ENCODE measurements at regions of chr2 and their contacts with region 1.

Region 1: DNA sequence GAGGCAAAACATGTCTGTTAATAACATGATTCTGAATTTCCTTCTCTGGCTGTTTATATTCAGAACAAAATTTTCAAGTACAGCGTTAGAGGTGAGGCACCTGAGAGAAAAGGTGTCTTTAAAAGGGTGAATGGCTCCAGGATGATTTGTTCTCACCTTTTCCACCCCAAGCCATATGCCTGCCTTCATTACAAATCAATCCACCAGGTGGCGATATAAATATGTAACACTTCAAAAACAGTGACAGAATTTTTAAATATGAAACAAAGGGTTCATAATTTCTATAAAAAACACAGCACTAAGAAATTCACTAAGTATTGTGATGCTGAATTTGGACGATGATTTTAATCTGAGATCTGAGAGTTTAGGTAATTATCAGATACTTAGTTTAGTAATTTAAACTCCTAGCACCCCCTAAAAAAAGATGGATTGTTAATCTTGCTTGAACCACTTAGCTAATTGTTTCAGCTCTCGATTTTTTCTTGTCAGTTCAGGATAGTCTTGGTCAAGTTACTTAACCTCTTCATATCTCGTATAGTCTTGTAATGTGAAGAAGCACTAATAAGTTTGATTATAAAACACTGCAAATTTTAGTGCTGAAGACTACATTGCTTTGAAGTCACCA is 528.8 kb downstream of the CPS1 start:
- DNase-seq: no peak
- ATAC-seq: peak; percentile 73
- H3K4me3 ChIP-seq: no peak overlapping the region
- H3K27ac ChIP-seq: no peak overlapping the region
- H3K4me1 ChIP-seq: no peaks in the 10 kb centered on the region
- H3K27me3 ChIP-seq: no peaks in the 10 kb centered on the region
- CTCF ChIP-seq: peak; percentile 44 to 57 (median 50); a peak in 5 of 6 replicates
- EP300 ChIP-seq: no peak
- POLR2A ChIP-seq: no peak
- RAD21 ChIP-seq: peak; percentile 40; the same call in 1 of the 2 replicates

Region 2: GRCh38 chr2:211070547-211070946 is 14.6 kb before region 1 on chr2:
- CTCF ChIA-PET with region 1: interaction called, 12 read pairs
- POLR2A ChIA-PET with region 1: no interaction called
- RAD21 ChIA-PET with region 1: interaction called, 4 read pairs
- SMC1A ChIA-PET with region 1: interaction called, 6 read pairs
- in situ Hi-C with region 1: no loop called
- intact Hi-C with region 1: no loop called
- DNase-seq: no peak
- ATAC-seq: peak; percentile 32; the same call in 2 of the 3 replicates
- H3K4me3 ChIP-seq: no peak overlapping the region
- H3K27ac ChIP-seq: no peak overlapping the region
- H3K4me1 ChIP-seq: no peaks in the 10 kb centered on the region
- H3K27me3 ChIP-seq: no peaks in the 10 kb centered on the region
- CTCF ChIP-seq: no peak
- EP300 ChIP-seq: no peak
- POLR2A ChIP-seq: no peak
- RAD21 ChIP-seq: no peak

Region 3: DNA sequence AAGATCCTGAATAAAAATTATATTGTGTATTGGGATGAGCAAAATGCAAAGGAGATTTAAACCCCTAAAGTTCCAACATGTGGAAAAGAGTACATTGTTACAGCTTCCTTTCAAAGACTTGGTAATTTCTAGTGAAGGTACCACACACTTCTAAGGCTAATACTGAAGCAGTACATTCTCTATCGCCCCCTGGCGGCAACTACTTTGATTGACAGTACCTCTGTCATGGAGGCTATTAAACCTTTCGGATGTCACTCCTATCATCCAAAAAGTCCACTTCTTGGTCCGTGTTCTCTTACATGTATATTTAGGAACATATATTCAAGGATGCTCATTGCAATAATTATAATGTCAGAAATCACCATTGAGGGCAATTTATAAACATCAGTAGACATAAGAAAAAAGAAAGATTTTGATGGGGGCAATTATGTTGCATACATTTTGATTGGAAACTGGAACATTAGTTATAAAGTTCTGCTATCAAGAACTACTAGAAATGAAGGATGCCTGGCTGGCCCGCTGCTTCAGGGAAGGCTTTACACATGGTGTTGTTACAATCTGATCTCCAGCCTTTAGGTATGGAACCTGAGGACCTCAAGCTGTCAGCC is 72.8 kb after region 1 on chr2:
- CTCF ChIA-PET with region 1: interaction called, 4 read pairs
- POLR2A ChIA-PET with region 1: no interaction called
- RAD21 ChIA-PET with region 1: interaction called, 3 read pairs
- SMC1A ChIA-PET with region 1: interaction called, 5 read pairs
- in situ Hi-C with region 1: no loop called
- intact Hi-C with region 1: loop called (anchors 2 kb)
- DNase-seq: peak; percentile 4
- ATAC-seq: peak; percentile 98
- H3K4me3 ChIP-seq: no peak overlapping the region
- H3K27ac ChIP-seq: no peak overlapping the region
- H3K4me1 ChIP-seq: no peaks in the 10 kb centered on the region
- H3K27me3 ChIP-seq: no peaks in the 10 kb centered on the region
- CTCF ChIP-seq: peak; percentile 73 to 92 (median 79)
- EP300 ChIP-seq: no peak
- POLR2A ChIP-seq: no peak
- RAD21 ChIP-seq: peak; percentile 52

Region 4: GRCh38 chr2:211351987-211352386 is 266.8 kb after region 1 on chr2:
- CTCF ChIA-PET with region 1: no interaction called
- POLR2A ChIA-PET with region 1: no interaction called
- RAD21 ChIA-PET with region 1: no interaction called
- SMC1A ChIA-PET with region 1: no interaction called
- in situ Hi-C with region 1: no loop called
- intact Hi-C with region 1: loop called (anchors 10 kb)
- DNase-seq: no peak
- ATAC-seq: no peak
- H3K4me3 ChIP-seq: no peak overlapping the region
- H3K27ac ChIP-seq: no peak overlapping the region
- H3K4me1 ChIP-seq: no peaks in the 10 kb centered on the region
- H3K27me3 ChIP-seq: no peaks in the 10 kb centered on the region
- CTCF ChIP-seq: no peak
- EP300 ChIP-seq: no peak
- POLR2A ChIP-seq: no peak
- RAD21 ChIP-seq: no peak

Measured in GM12878 (cell line).